PC-9 (cell line): ENCODE measurements at regions of chr4 and their contacts with region 1.

Region 1: GRCh38 chr4:41060352-41061334 is 153.7 kb downstream of the APBB2 start:
- DNase-seq: no peak
- H3K4me3 ChIP-seq: no peak overlapping the region
- H3K27ac ChIP-seq: no peak overlapping the region
- H3K4me1 ChIP-seq: 0 out of 2 replicates have a peak, but pooled peaks cover 4% of the 10 kb centered on the region
- H3K27me3 ChIP-seq: no peaks in the 10 kb centered on the region
- CTCF ChIP-seq: no peak

Region 2: DNA sequence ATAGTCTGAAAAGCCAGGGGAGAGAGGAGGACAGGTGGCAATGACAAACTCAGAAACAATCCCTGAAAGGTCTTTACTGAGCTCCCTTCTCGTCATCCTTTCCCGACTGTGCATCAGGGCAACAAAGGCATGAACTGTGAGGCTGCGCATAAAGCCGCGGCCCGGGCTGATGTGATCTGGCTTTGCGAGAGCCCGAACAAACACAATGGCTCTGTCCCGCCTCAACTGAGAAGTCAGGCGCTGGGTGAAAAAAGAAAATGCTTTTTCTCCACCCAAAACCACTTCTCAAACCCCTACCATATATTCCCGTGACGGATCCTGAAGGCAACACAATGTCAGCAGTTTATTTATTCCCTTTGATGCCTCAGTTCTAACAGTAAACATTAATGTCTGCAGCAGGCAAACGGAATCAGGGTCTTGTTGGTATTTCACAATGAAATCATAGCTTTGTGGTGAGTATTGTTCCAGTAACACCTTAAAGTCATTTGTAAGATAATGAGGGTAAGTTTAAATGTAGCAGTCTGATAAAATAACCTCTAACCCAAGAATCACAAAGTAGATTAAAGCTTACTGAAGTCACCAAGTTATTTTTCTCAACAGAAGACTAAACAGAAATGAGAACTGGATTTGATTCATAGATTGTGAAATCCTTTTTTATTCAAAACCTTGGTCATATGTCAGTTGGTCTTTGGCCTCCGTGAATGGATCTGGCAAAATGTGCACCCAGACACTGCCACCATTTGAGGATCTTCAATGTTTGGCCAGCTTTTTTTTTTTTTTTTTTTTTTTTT is 86.3 kb after region 1 on chr4:
- CTCF ChIA-PET with region 1: interaction called, 12 read pairs
- POLR2A ChIA-PET with region 1: no interaction called
- intact Hi-C with region 1: no loop called
- DNase-seq: no peak
- H3K4me3 ChIP-seq: no peak overlapping the region
- H3K27ac ChIP-seq: no peak overlapping the region
- H3K4me1 ChIP-seq: no peaks in the 10 kb centered on the region
- H3K27me3 ChIP-seq: no peaks in the 10 kb centered on the region
- CTCF ChIP-seq: no peak